ENCODE measurements at regions of chr3 and their contacts with region 1.

Region 1: DNA sequence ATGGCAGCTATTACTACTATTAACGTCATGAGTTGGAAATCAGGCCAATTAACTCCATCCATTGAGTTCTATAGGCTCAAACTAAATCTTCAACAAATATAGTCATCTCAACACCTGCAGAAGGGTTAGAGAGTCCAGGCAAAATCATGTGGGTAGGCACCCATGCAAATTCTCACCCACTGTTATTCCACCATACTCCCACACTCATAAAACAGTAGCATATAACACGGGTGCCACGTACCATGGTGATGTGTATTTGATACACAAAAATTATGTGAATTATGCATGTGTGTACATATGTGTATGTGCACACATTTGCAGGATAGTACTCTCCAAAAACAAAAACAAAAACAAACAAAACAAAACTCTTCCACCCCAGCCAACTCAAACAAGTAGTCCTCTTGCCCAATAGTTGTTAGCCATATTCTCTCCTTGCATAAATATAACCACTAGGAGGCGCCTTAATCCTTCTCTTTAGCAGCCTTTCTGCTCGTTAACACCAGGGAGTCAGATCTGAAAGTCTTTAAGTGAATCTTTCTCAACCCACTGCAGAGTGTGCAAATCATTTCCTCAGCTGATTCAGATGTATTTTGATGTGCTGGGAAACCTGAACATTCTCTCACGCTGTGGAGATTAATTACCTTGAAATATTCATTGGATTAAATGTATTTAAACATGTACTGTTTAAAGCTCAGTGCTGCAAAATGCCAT is 38.0 kb upstream of the COPB2 start:
- DNase-seq: peak; percentile 66
- H3K27ac ChIP-seq: no peak overlapping the region
- CTCF ChIP-seq: peak; percentile 73

Region 2: DNA sequence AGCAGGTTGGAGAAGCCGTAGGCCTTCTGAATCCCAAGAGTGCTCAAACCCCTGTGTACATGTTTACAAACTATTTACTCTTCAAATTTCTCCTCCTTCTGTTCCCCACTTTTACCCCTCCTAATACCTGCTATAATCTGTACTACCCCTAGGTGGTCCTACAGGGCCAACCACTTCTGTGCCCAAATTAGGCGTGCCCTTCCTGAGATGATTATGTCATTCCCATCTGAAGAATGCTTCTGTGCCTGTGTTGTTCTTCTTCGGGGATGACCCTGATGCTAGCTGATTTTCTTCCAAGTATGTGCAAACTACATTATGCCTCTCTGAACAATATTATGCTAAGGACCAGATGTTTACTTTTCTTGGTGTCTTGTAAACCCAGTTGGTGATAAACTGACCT is 28.4 kb after region 1 on chr3:
- CTCF ChIA-PET with region 1: no interaction called
- POLR2A ChIA-PET with region 1: no interaction called
- DNase-seq: no peak
- H3K27ac ChIP-seq: no peak overlapping the region
- CTCF ChIP-seq: no peak

Region 3: GRCh38 chr3:139561959-139562676 is 134.7 kb after region 1 on chr3:
- CTCF ChIA-PET with region 1: interaction called, 13 read pairs
- POLR2A ChIA-PET with region 1: interaction called, 6 read pairs
- DNase-seq: peak; percentile 59
- H3K27ac ChIP-seq: no peak overlapping the region
- CTCF ChIP-seq: peak; percentile 59